ENCODE measurements at regions of chr5 and their contacts with region 1.

Region 1: GRCh38 chr5:52989781-52990527 is 802 bp downstream of the ITGA2 start:
- DNase-seq: peak; percentile 20 to 94 (median 59)

Region 2: GRCh38 chr5:52895572-52896413 is 94.2 kb before region 1 on chr5:
- intact Hi-C with region 1: no loop called
- DNase-seq: no peak

Region 3: GRCh38 chr5:52948418-52949076 is 41.4 kb before region 1 on chr5:
- intact Hi-C with region 1: loop called (anchors 2 kb)
- DNase-seq: peak in 7 of 10 donors; percentile 34 to 82 (median 54)

Region 4: DNA sequence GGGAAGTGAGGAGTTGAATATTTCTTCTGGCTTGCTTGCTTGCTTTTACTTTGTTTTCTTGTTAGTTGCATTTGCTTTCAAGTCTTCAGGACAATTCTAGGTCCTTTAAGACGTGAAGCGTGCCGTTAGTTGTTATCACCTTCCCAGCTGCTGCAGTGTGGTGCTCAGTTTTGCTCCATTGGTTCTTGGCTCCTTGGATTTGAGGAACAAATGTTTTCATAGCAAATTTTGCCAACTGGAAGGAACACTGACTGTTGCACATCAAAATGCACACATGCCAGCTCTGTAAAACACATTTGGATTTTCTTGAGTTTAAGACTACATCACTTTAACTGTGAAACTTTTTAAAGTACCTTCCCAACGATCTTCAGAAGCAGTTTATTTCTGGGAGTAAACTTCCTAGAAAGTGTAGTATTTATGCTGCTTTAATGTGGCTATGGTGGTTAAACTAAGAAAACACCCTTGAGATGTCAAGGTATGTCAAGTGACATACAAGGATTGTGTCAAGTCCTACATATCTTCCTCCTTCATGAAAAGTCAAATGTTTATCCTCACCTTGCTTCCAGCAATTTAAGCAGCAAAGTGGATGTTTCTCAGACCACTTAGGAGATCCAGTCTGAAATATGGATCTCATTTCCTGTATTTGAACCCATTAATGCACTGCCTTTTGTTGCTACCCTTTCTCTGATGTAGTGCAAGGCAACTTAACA is 94.7 kb after region 1 on chr5:
- intact Hi-C with region 1: no loop called
- DNase-seq: no peak